ENCODE measurements at regions of chr6 and their contacts with region 1.

Region 1: GRCh38 chr6:105087571-105088211 is 92.1 kb downstream of the POPDC3 start:
- DNase-seq: peak; percentile 16 to 75
- H3K4me3 ChIP-seq: no peak overlapping the region
- H3K27ac ChIP-seq: no peak overlapping the region
- H3K4me1 ChIP-seq: peaks cover 4% of the 10 kb centered on the region; the same call in 1 of the 2 replicates
- H3K27me3 ChIP-seq: no peaks in the 10 kb centered on the region
- CTCF ChIP-seq: peak; percentile 96

Region 2: GRCh38 chr6:105179244-105180065 is 91.8 kb after region 1 on chr6 and contains the start of gene POPDC3:
- CTCF ChIA-PET with region 1: interaction called, 11 read pairs
- POLR2A ChIA-PET with region 1: no interaction called
- intact Hi-C with region 1: no loop called
- DNase-seq: peak; percentile 49 to 64
- H3K4me3 ChIP-seq: peak within 1 kb of the TSS; percentile 86
- H3K27ac ChIP-seq: peak within 1 kb of the TSS; percentile 94
- H3K4me1 ChIP-seq: peaks cover 30% of the 10 kb centered on the region
- H3K27me3 ChIP-seq: no peaks in the 10 kb centered on the region
- CTCF ChIP-seq: no peak
- total RNA-seq, gene POPDC3: 14.8 and 24.2 TPM in 2 replicates

Region 3: GRCh38 chr6:105363100-105363754 is 275.5 kb after region 1 on chr6:
- CTCF ChIA-PET with region 1: interaction called, 9 read pairs
- POLR2A ChIA-PET with region 1: interaction called, 3 read pairs
- intact Hi-C with region 1: loop called (anchors 1 kb)
- DNase-seq: no peak
- H3K4me3 ChIP-seq: no peak overlapping the region
- H3K27ac ChIP-seq: no peak overlapping the region
- H3K4me1 ChIP-seq: peaks cover 20% of the 10 kb centered on the region
- H3K27me3 ChIP-seq: no peaks in the 10 kb centered on the region
- CTCF ChIP-seq: peak; percentile 61